ENCODE measurements at regions of chr14 and their contacts with region 1.

Region 1: DNA sequence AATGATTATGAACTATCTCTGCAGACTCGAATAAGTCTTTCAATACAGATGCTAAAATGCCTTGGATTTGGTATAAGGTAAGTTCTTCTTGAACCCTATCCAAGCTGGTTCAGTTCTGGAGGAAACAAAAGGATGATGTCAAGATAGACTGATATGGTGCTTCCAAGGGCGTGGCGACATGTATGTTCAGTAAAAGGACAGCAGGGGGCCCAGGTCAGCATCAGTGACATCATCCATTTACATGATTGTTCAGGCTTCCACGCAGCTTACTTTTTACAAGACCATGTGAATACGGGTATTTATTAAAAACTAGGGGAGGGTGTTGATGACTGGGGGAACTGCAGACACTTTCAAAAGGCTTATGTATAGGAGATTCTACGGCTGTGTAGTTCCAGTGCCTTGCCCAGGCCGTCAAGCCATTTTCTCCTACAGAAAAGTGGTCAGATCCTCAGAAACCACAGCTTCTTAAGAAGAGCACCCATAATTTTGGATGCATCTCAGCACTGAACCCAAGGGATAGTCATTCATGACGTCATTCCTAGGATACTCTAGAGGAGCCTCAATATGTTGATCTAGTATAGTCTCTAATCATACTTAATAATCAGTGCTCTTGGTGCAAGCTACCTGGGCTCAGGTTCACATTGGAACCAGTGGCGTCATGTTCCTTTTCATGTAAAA is 527.7 kb downstream of the FUT8 start:
- DNase-seq: no peak
- H3K4me3 Mint-ChIP-seq: no peak overlapping the region
- H3K27ac Mint-ChIP-seq: no peak overlapping the region
- H3K4me1 Mint-ChIP-seq: peaks cover 47% of the 10 kb centered on the region
- H3K27me3 Mint-ChIP-seq: no peaks in the 10 kb centered on the region

Region 2: GRCh38 chr14:65866886-65867285 is 73.3 kb before region 1 on chr14:
- CTCF ChIA-PET with region 1: no interaction called
- POLR2A ChIA-PET with region 1: no interaction called
- DNase-seq: no peak
- H3K4me3 Mint-ChIP-seq: no peak overlapping the region
- H3K27ac Mint-ChIP-seq: no peak overlapping the region
- H3K4me1 Mint-ChIP-seq: peaks cover 50% of the 10 kb centered on the region
- H3K27me3 Mint-ChIP-seq: no peaks in the 10 kb centered on the region

Region 3: DNA sequence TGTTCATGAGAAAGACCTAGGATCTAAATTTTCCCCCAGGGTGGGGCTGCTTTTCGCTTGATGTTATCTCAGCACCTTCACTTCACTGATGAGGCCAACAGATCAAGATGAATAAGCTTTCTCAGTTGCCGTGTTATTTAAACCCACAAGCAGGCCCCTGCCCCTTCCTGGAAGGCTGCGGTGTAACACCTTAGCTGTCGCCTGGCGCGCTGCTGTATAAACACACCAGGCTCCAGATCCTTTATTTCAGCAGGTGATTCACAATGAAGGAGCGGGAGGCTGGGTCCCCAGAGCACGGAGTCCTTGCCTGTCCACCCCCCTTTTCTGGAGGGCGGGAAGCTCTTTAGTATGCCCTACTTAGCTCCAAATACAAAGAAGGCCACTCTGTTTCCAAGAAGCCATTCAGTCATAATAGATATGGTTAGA is 12.3 kb before region 1 on chr14:
- CTCF ChIA-PET with region 1: interaction called, 21 read pairs
- POLR2A ChIA-PET with region 1: no interaction called
- DNase-seq: peak; percentile 89
- H3K4me3 Mint-ChIP-seq: peak overlapping the region; percentile 27
- H3K27ac Mint-ChIP-seq: peak overlapping the region; percentile 92
- H3K4me1 Mint-ChIP-seq: peaks cover 76% of the 10 kb centered on the region
- H3K27me3 Mint-ChIP-seq: no peaks in the 10 kb centered on the region

Region 4: GRCh38 chr14:66206554-66206953 is 266.4 kb after region 1 on chr14:
- CTCF ChIA-PET with region 1: no interaction called
- POLR2A ChIA-PET with region 1: no interaction called
- DNase-seq: no peak
- H3K4me3 Mint-ChIP-seq: no peak overlapping the region
- H3K27ac Mint-ChIP-seq: no peak overlapping the region
- H3K4me1 Mint-ChIP-seq: no peaks in the 10 kb centered on the region
- H3K27me3 Mint-ChIP-seq: peaks cover 9% of the 10 kb centered on the region